ENCODE measurements at regions of chr17 and their contacts with region 1.

Region 1: DNA sequence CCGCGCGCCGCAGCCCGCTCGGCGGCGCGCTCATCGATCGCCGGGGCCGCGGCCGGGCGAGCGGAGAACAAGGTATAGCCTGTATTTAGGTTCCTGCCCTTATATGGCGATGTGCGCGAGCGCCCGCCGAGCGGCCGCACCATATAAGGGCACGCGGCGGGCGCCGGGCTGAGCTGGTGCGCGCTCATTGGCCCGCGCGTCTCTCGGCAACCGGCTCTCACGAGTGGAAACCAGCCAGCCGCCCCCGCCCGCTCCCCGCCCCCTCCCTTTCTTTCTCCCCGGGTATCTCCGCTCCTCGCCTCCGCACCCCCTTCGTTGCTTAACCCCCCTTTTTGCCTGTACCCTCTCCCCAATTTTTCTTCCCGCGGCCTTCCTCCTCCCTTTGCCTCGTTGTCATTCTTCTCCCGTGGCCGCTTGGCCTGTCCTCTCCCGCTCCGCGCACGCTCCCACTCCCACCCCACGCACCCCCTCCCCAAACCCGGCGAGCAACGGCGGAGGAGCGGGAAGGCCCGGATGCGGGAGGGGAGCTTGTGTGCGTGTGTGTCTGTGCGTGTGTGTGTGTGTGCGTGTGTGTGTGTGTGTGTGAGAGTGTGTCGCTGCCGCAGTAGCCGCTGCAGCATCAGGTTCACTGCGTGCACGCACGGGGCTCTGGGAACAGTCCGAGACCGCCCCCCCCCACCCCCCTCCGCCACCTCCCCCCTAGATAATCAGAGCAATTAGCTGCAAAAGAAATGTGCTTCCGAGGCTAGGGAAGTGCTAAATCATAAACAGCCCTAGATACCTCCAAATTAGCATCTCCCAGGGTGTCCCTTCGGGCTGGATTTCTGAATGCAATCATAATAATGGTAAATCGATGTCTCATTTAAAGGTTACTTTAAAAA is 13.5 kb upstream of the CBX8 start:
- DNase-seq: peak; percentile 70
- ATAC-seq: peak; percentile 89
- H3K4me3 ChIP-seq: peak overlapping the region; percentile 28 to 53
- H3K27ac ChIP-seq: no peak overlapping the region
- H3K4me1 ChIP-seq: peaks cover 25 to 44% of the 10 kb centered on the region in 2 experiments
- H3K27me3 ChIP-seq: peaks cover 6% of the 10 kb centered on the region; the same call in 1 of the 2 replicates
- CTCF ChIP-seq: no peak
- POLR2A ChIP-seq: no peak
- RAD21 ChIP-seq: no peak

Region 2: DNA sequence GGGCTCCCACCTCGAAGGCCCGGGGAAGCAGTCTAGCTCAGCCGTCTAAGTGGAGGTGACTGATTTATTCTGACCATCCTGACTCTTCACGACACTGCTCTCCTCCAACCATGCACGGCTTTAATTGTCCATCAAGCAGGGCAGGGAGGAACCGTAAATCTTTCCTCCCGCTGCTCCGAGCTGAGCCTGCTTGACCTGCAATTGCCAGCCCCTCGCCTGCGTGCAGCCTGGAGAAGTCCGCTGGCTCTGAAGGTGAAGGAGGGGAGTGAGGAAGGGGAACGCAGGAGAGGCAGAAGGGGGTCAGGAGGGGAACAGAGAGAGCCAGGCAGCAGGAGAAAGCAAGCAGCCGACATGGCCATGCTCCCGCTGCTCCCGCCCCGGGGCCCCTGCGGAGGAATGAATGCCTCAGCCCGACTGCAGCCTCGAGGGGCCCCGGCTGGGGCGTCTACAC is 209.7 kb before region 1 on chr17:
- CTCF ChIA-PET with region 1: no interaction called
- POLR2A ChIA-PET with region 1: no interaction called
- RAD21 ChIA-PET with region 1: no interaction called
- intact Hi-C with region 1: no loop called
- DNase-seq: no peak
- ATAC-seq: no peak
- H3K4me3 ChIP-seq: no peak overlapping the region
- H3K27ac ChIP-seq: no peak overlapping the region
- H3K4me1 ChIP-seq: no peaks in the 10 kb centered on the region
- H3K27me3 ChIP-seq: peaks cover 78% of the 10 kb centered on the region
- CTCF ChIP-seq: no peak
- POLR2A ChIP-seq: no peak
- RAD21 ChIP-seq: no peak

Region 3: DNA sequence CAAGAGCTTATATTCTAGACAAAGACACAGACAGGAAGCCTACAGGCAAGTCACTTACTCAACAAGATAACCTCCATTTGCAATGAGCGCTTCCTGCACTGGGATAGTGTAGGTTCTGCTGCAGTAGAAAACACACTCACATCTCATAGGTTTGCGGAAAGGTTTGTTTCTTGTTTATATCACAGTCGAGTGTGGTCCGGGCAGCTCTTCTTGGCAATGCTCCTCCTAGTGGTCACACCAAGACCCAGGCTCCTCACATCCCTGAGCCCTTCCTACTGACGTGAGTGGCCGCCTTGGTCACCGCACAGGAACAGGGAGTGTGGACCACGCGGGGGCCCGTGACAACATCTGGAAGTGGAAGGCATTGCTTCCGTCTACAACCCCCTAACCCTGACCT is 151.6 kb before region 1 on chr17:
- CTCF ChIA-PET with region 1: no interaction called
- POLR2A ChIA-PET with region 1: no interaction called
- RAD21 ChIA-PET with region 1: no interaction called
- intact Hi-C with region 1: no loop called
- DNase-seq: peak; percentile 43
- ATAC-seq: peak; percentile 100
- H3K4me3 ChIP-seq: no peak overlapping the region
- H3K27ac ChIP-seq: no peak overlapping the region
- H3K4me1 ChIP-seq: no peaks in the 10 kb centered on the region; a peak in 2 of 4 replicates
- H3K27me3 ChIP-seq: peaks cover 8% of the 10 kb centered on the region
- CTCF ChIP-seq: peak in 2 of 3 experiments; percentile 84 to 96; a peak in 4 of 6 replicates
- POLR2A ChIP-seq: no peak
- RAD21 ChIP-seq: peak; percentile 36; the same call in 1 of the 2 replicates

Region 4: GRCh38 chr17:79749156-79749815 is 61.1 kb before region 1 on chr17:
- CTCF ChIA-PET with region 1: interaction called, 14 read pairs
- POLR2A ChIA-PET with region 1: no interaction called
- RAD21 ChIA-PET with region 1: no interaction called
- intact Hi-C with region 1: no loop called
- DNase-seq: no peak
- ATAC-seq: no peak
- H3K4me3 ChIP-seq: no peak overlapping the region
- H3K27ac ChIP-seq: no peak overlapping the region
- H3K4me1 ChIP-seq: peaks cover 11 to 32% of the 10 kb centered on the region in 2 experiments; a peak in 3 of 4 replicates
- H3K27me3 ChIP-seq: no peaks in the 10 kb centered on the region
- CTCF ChIP-seq: no peak
- POLR2A ChIP-seq: no peak
- RAD21 ChIP-seq: no peak

Region 5: GRCh38 chr17:79796763-79797491 is 13.4 kb before region 1 on chr17 and contains the start of gene CBX8:
- CTCF ChIA-PET with region 1: interaction called, 13 read pairs
- POLR2A ChIA-PET with region 1: interaction called, 5 read pairs
- RAD21 ChIA-PET with region 1: interaction called, 4 to 8 read pairs
- intact Hi-C with region 1: no loop called
- DNase-seq: peak; percentile 100
- ATAC-seq: peak; percentile 77
- H3K4me3 ChIP-seq: peak within 1 kb of the TSS; percentile 80 to 92
- H3K27ac ChIP-seq: peak within 1 kb of the TSS; percentile 90
- H3K4me1 ChIP-seq: peaks cover 41 to 62% of the 10 kb centered on the region in 2 experiments
- H3K27me3 ChIP-seq: no peaks in the 10 kb centered on the region
- CTCF ChIP-seq: no peak
- POLR2A ChIP-seq: peak; percentile 72
- RAD21 ChIP-seq: no peak
- total RNA-seq, gene CBX8: 29.0 TPM

Region 6: GRCh38 chr17:79831367-79832210 is 21.2 kb after region 1 on chr17:
- CTCF ChIA-PET with region 1: interaction called, 18 read pairs
- POLR2A ChIA-PET with region 1: interaction called, 7 read pairs
- RAD21 ChIA-PET with region 1: no interaction called
- intact Hi-C with region 1: no loop called
- DNase-seq: no peak
- ATAC-seq: no peak
- H3K4me3 ChIP-seq: no peak overlapping the region
- H3K27ac ChIP-seq: no peak overlapping the region; the same call in 1 of the 2 replicates
- H3K4me1 ChIP-seq: peaks cover 43 to 58% of the 10 kb centered on the region in 2 experiments
- H3K27me3 ChIP-seq: no peaks in the 10 kb centered on the region
- CTCF ChIP-seq: no peak
- POLR2A ChIP-seq: no peak
- RAD21 ChIP-seq: no peak

Region 7: DNA sequence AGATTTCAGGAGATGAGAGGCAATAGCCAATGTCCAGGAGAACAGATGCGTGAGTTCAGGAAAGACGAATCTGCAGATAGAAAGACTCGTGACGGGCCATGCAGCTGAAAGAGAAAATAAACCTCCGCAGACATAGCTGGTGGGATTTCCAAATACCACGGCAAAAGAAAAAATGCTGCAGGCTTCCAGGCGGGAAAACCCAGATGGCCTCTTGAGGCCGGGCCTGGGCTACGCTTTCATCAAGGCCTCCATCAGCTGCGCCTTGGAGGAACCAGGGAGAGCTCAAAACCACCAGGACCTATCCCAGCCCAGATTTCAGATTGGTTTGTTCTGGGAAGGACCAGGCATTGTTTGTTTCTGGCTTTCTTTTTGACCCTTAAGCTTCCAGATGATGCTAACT is 242.7 kb after region 1 on chr17:
- CTCF ChIA-PET with region 1: no interaction called
- POLR2A ChIA-PET with region 1: no interaction called
- RAD21 ChIA-PET with region 1: no interaction called
- intact Hi-C with region 1: no loop called
- DNase-seq: no peak
- ATAC-seq: no peak
- H3K4me3 ChIP-seq: no peak overlapping the region
- H3K27ac ChIP-seq: no peak overlapping the region
- H3K4me1 ChIP-seq: no peaks in the 10 kb centered on the region
- H3K27me3 ChIP-seq: no peaks in the 10 kb centered on the region
- CTCF ChIP-seq: no peak
- POLR2A ChIP-seq: no peak
- RAD21 ChIP-seq: no peak

Region 8: DNA sequence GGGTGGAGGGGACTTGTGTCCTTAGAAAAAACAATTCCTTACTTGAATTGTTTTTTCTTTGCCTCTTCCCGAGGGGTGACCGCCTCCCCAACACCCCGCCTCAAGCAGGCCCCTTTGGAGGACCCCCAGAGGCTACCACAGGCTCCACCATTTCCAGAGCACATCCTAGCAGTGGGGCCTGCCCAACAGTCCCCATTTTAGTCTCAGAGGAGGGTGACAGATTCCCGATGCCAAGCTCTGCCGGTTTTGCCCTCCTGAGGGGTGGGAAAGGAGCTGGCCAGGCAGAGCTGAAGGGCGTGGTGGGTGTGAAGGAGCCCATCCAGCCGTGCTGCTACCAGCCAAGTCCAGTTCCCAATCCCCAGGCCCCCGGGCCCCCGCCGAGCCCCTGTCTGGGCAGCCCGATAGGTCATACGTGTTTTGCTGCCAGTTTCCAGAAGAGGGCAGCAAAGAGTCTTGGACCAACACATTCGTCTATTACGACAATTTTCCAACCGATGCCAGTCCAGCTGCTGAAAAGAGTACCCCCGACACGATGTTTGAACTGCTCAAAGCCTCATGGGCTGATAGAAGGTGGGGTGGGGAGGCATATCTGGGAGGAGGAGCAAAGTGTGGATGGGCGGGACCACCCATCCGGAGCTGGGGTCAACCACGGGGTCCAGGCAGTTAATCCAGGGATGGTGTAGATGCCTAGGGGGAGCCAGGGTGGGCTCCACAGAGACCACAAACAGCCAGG is 272.2 kb after region 1 on chr17:
- CTCF ChIA-PET with region 1: no interaction called
- POLR2A ChIA-PET with region 1: no interaction called
- RAD21 ChIA-PET with region 1: no interaction called
- intact Hi-C with region 1: no loop called
- DNase-seq: peak; percentile 75
- ATAC-seq: peak; percentile 90
- H3K4me3 ChIP-seq: peak overlapping the region; percentile 2 to 43
- H3K27ac ChIP-seq: no peak overlapping the region
- H3K4me1 ChIP-seq: peaks cover 0 to 13% of the 10 kb centered on the region in 2 experiments; a peak in 2 of 4 replicates
- H3K27me3 ChIP-seq: no peaks in the 10 kb centered on the region
- CTCF ChIP-seq: peak; percentile 78 to 93 (median 85)
- POLR2A ChIP-seq: no peak
- RAD21 ChIP-seq: peak; percentile 86